CD8-positive, alpha-beta T cell (primary cell): ENCODE measurements at regions of chr2 and their contacts with region 1.

Region 1: DNA sequence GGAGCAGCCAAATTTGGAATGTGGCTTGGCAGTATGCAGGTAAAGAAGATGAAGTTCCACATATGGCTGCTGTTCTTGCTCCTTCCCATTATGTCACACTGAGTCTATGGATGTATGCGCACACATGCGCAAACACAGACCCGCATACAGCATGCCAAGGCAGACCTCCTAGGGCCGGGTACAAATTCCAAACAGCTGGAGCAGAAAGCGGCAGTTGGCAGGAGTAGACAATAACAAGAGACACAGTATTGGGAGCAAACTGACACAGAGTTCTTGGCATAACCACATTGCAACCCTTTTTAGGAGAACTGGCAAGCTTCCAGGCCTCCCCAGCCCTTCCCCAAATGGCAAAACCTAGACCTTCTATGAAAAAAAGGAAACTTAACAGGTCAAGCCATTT is 268.9 kb downstream of the SP3 start:
- DNase-seq: no peak
- ATAC-seq: no peak
- H3K4me3 ChIP-seq: no peak overlapping the region
- H3K4me3 Mint-ChIP-seq: no peak overlapping the region
- H3K27ac ChIP-seq: no peak overlapping the region
- H3K27ac Mint-ChIP-seq: no peak overlapping the region
- H3K4me1 ChIP-seq: no peaks in the 10 kb centered on the region
- H3K4me1 Mint-ChIP-seq: no peaks in the 10 kb centered on the region
- H3K27me3 ChIP-seq: no peaks in the 10 kb centered on the region
- H3K27me3 Mint-ChIP-seq: peaks cover 5% of the 10 kb centered on the region
- CTCF ChIP-seq: no peak

Region 2: GRCh38 chr2:173684896-173685459 is 11.3 kb before region 1 on chr2:
- CTCF ChIA-PET with region 1: no interaction called
- POLR2A ChIA-PET with region 1: no interaction called
- intact Hi-C with region 1: loop called in 1 of 2 experiments (anchors 1 kb)
- DNase-seq: no peak
- ATAC-seq: no peak
- H3K4me3 ChIP-seq: no peak overlapping the region
- H3K4me3 Mint-ChIP-seq: no peak overlapping the region
- H3K27ac ChIP-seq: no peak overlapping the region
- H3K27ac Mint-ChIP-seq: no peak overlapping the region
- H3K4me1 ChIP-seq: no peaks in the 10 kb centered on the region
- H3K4me1 Mint-ChIP-seq: no peaks in the 10 kb centered on the region
- H3K27me3 ChIP-seq: no peaks in the 10 kb centered on the region
- H3K27me3 Mint-ChIP-seq: peaks cover 3% of the 10 kb centered on the region
- CTCF ChIP-seq: no peak